Activated T-helper 1 cell treated with anti-CD3 and anti-CD28 coated beads, Interleukin-12 subunit alpha, Interleukin-12 subunit beta, Interleukin-2, Interleukin-4 antibody, amounts not matched to agents 30 ng/mL and 10 ng/mL and 1 ng/mL, durations not matched to agents 14 hours and 24 hours and 36 hours (primary cell): ENCODE measurements at regions of chr4 and their contacts with region 1.

Region 1: GRCh38 chr4:15001869-15002658 is at the start of gene CPEB2:
- DNase-seq: peak; percentile 88
- H3K4me3 Mint-ChIP-seq: peak within 1 kb of the TSS; percentile 92
- H3K27ac Mint-ChIP-seq: peak within 1 kb of the TSS; percentile 93
- H3K4me1 Mint-ChIP-seq: peaks cover 20% of the 10 kb centered on the region
- H3K27me3 Mint-ChIP-seq: no peaks in the 10 kb centered on the region
- total RNA-seq, gene CPEB2: 16.5 and 17.2 TPM in 2 replicates

Region 2: GRCh38 chr4:13654158-13654797 is 1347.8 kb before region 1 on chr4:
- intact Hi-C with region 1: loop called (anchors 1 kb)
- DNase-seq: peak; percentile 70
- H3K4me3 Mint-ChIP-seq: peak overlapping the region; percentile 82
- H3K27ac Mint-ChIP-seq: no peak overlapping the region
- H3K4me1 Mint-ChIP-seq: peaks cover 19% of the 10 kb centered on the region
- H3K27me3 Mint-ChIP-seq: peaks cover 16% of the 10 kb centered on the region

Region 3: GRCh38 chr4:14100349-14100748 is 901.7 kb before region 1 on chr4:
- intact Hi-C with region 1: no loop called
- DNase-seq: no peak
- H3K4me3 Mint-ChIP-seq: no peak overlapping the region
- H3K27ac Mint-ChIP-seq: no peak overlapping the region
- H3K4me1 Mint-ChIP-seq: no peaks in the 10 kb centered on the region
- H3K27me3 Mint-ChIP-seq: no peaks in the 10 kb centered on the region

Region 4: GRCh38 chr4:14856076-14856933 is 145.8 kb before region 1 on chr4:
- intact Hi-C with region 1: loop called (anchors 1 kb)
- DNase-seq: peak; percentile 61
- H3K4me3 Mint-ChIP-seq: no peak overlapping the region
- H3K27ac Mint-ChIP-seq: peak overlapping the region; percentile 80
- H3K4me1 Mint-ChIP-seq: peaks cover 52% of the 10 kb centered on the region
- H3K27me3 Mint-ChIP-seq: no peaks in the 10 kb centered on the region

Region 5: DNA sequence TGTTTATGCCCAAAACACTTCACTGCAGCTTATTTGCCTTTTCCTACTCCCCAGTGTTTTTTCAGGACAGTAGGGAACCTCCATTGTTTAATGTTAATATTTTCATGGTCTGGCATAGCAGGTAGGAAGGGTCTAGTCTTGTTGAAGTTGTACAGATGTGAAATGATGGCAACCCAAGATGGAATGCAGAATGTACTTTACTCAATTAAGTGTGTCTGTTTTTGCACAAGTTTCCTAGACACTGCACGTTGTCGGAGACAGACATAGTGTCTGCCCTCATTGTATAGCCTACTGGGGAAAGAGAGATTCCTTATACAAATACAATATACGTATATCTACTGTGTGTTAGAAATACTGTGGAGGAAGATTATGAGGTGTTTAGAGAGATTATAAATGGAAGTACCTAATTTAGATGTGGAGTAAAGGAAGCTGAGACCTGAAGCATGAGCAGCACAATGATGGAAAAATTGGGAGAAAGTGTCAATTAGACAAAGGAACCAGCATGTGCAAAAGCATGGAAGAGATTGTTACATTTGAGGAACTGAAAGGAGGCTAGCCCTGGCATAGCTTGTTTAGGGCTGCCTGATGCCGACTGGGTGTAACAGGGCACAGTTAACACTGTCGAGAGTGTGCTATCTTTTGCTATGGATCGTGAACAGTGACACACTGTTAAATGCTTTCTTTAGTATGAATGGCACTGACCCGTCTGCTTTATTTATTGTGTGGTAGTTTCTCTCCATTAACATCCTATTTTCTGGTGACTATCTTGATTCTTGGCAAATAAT is 18.6 kb after region 1 on chr4:
- intact Hi-C with region 1: loop called (anchors 1 kb)
- DNase-seq: no peak
- H3K4me3 Mint-ChIP-seq: no peak overlapping the region
- H3K27ac Mint-ChIP-seq: no peak overlapping the region
- H3K4me1 Mint-ChIP-seq: peaks cover 42% of the 10 kb centered on the region
- H3K27me3 Mint-ChIP-seq: no peaks in the 10 kb centered on the region

Region 6: GRCh38 chr4:15089979-15090378 is 87.9 kb after region 1 on chr4:
- intact Hi-C with region 1: no loop called
- DNase-seq: no peak
- H3K4me3 Mint-ChIP-seq: no peak overlapping the region
- H3K27ac Mint-ChIP-seq: no peak overlapping the region
- H3K4me1 Mint-ChIP-seq: no peaks in the 10 kb centered on the region
- H3K27me3 Mint-ChIP-seq: peaks cover 11% of the 10 kb centered on the region

Region 7: GRCh38 chr4:15182600-15183220 is 180.6 kb after region 1 on chr4:
- intact Hi-C with region 1: loop called (anchors 2 kb)
- DNase-seq: no peak
- H3K4me3 Mint-ChIP-seq: no peak overlapping the region
- H3K27ac Mint-ChIP-seq: peak overlapping the region; percentile 67
- H3K4me1 Mint-ChIP-seq: peaks cover 15% of the 10 kb centered on the region
- H3K27me3 Mint-ChIP-seq: peaks cover 5% of the 10 kb centered on the region

Region 8: DNA sequence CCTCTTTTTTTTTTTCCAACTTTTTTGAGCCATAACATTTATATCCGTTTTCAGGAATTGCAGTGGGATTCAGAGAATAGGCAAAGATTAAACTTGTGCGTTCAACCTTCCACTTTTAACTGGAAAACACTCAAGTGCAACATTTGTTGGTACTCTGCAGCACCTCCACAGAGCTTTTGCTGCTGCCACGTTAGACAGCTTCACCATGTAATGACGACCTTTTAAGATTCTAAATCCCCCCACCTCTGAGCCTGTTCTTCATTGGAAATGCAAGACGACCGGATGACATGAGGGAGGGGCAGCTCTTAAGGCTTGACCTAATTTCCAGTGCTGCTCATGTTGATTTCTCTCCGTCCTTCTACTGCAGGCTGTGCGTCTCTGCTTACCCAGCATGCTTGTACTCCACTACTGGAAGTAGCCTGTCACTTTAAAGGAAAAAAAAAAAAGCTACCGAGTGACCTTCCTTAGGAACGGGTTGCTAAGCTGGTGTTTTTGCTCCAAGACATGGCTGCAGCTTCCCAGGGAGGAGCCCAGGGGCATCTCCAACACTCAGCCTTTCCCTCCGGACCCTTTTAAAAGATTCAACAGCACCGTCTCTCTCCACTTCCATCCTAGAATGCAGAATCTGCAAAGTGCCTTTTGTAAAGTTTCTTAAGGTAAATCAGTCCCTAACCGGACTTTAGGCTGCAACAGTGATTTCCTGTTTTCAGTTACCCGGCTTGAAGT is 467.5 kb after region 1 on chr4 and contains the start of gene CC2D2A:
- intact Hi-C with region 1: no loop called
- DNase-seq: no peak
- H3K4me3 Mint-ChIP-seq: no peak within 1 kb of the TSS
- H3K27ac Mint-ChIP-seq: no peak within 1 kb of the TSS
- H3K4me1 Mint-ChIP-seq: peaks cover 5% of the 10 kb centered on the region
- H3K27me3 Mint-ChIP-seq: peaks cover 6% of the 10 kb centered on the region
- total RNA-seq, gene CC2D2A: not detected in 2 replicates

Region 9: DNA sequence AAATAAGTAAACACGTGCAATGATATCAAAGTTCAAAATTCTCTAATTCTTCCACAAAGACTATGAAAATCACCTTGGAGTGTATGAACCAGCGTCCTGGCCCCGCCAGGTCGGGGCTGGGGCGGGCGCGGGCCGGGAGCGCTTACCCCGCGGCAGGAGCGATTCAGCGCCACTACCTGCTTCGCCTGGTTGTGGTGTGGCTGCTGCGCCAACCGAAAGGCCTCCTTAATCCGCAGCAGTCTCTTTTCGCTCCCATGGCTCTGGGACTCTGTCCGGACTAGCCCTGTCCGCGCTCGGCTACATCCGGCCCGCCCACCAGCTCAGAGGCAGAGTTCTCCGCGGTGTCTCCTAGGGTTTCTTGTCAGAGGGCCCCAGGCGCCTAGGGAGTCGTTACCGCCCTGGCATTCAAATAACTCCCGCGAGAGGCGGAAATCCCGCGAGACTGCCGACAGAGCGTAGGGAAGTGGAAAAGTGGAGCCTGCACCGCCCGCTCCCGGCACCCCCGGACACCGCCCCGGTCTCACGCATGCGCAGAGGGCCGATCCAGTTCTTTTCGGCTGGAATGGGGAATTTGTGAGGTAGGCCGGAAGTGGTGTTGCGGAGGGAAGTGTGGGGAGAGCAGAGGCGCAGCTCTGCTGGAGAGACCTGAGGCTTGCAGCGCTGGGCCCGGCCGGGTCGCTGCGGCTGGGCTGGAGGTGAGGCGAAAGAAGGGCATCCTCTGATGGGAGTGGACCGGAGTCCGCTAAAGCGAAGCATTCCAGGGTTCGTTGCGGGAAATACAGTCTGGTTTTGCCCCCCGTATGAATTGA is 679.3 kb after region 1 on chr4 and contains the start of gene FAM200B:
- intact Hi-C with region 1: loop called (anchors 1 kb)
- DNase-seq: peak; percentile 97
- H3K4me3 Mint-ChIP-seq: peak within 1 kb of the TSS; percentile 97
- H3K27ac Mint-ChIP-seq: peak within 1 kb of the TSS; percentile 94
- H3K4me1 Mint-ChIP-seq: peaks cover 45% of the 10 kb centered on the region
- H3K27me3 Mint-ChIP-seq: no peaks in the 10 kb centered on the region
- total RNA-seq, gene FAM200B: 5.5 and 6.6 TPM in 2 replicates

Region 10: DNA sequence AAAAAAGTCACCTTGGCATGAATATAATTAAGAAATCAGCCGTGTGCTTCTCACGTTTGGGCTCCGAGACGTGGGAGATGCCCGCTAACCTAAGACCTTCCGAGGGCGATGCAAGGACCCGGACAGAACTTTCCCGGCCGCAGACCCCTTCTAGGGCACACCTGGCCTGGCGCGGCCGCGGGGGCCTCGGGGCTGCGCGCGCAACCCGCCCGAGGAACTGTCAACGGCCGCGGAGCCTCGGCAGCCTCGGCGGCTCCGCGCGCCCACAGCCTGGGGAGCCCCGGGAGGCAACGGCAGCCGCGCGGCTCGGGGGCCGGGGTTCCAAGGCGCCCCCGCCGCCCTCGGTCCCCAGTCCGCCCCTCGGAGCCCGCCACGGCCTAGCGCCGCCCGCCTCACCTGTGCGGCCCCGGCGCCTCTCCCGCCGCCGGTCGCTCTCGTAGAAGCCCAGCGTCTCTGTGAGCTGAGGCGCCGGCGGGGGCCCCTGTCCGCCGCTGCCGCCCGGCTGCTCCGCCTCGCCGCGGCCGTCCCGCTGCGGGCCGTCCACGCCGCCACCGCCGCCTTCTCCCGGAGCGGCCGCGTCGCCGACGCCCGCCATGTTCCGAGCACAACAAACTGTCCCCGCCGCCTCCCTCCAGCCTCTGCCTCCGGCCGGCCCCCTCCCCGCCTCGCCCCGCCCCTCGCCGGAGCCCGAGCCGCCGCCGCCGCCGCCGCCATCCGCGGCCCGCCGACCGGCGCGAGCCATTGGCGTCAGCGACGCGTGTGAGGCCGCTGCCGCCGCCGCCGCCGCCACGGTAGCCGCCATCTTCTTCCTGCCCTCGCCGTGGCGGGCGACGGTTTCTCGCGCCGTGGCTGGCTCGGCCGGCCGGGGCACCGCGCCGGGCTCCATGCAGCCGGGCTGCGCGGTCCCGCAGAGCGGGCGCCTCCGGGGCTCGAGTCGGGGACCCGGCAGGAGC is 1224.1 kb after region 1 on chr4 and contains the start of gene TAPT1:
- intact Hi-C with region 1: loop called (anchors 5 kb)
- DNase-seq: peak; percentile 78
- H3K4me3 Mint-ChIP-seq: peak within 1 kb of the TSS; percentile 97
- H3K27ac Mint-ChIP-seq: peak within 1 kb of the TSS; percentile 96
- H3K4me1 Mint-ChIP-seq: peaks cover 60% of the 10 kb centered on the region
- H3K27me3 Mint-ChIP-seq: no peaks in the 10 kb centered on the region
- total RNA-seq, gene TAPT1: 26.0 and 31.8 TPM in 2 replicates